Panc1 (cell line): ENCODE measurements at regions of chr10 and their contacts with region 1.

Region 1: DNA sequence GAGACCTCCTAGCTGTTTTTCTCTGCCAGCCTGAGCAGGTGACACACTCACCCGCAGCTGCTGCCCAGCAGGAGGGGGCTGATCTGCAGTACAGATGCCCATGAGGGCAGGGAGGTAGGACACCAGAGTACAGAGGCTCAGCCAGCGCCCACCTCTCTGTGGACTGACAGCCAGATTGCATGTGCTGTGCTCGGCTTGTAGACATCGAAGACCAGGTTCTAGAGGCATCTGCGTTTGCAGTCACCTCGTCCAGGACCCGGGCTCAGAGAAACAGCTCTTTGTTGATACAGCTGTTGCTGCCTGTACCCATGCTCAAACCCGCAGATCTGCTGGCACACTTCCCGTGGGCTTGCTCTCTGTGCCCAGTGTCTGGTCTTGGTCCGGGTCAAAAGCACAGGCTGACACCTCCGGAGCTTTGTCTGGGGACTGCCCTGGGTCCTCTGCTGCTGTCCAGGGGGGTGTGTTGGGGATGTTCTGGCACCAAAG is 224.7 kb downstream of the GLRX3 start:
- DNase-seq: no peak
- ATAC-seq: no peak
- H3K4me3 ChIP-seq: no peak overlapping the region
- H3K27ac ChIP-seq: no peak overlapping the region
- H3K4me1 ChIP-seq: no peaks in the 10 kb centered on the region
- H3K27me3 ChIP-seq: no peaks in the 10 kb centered on the region; the same call in 1 of the 2 replicates
- CTCF ChIP-seq: no peak

Region 2: GRCh38 chr10:131576341-131577177 is 1215.7 kb after region 1 on chr10:
- CTCF ChIA-PET with region 1: no interaction called
- POLR2A ChIA-PET with region 1: interaction called, 10 read pairs
- in situ Hi-C with region 1: no loop called
- intact Hi-C with region 1: no loop called
- DNase-seq: no peak
- ATAC-seq: no peak
- H3K4me3 ChIP-seq: no peak overlapping the region
- H3K27ac ChIP-seq: no peak overlapping the region
- H3K4me1 ChIP-seq: no peaks in the 10 kb centered on the region
- H3K27me3 ChIP-seq: no peaks in the 10 kb centered on the region; the same call in 1 of the 2 replicates
- CTCF ChIP-seq: no peak